Activated CD4-positive, alpha-beta memory T cell treated with anti-CD3 and anti-CD28 coated beads, Interleukin-2, amount 10 ng/mL, durations not matched to agents 7 days and 5 days (primary cell): ENCODE measurements at regions of chr18 and their contacts with region 1.

Region 1: GRCh38 chr18:13268158-13269012 is 49.8 kb downstream of the LDLRAD4 start:
- DNase-seq: no peak
- H3K4me3 Mint-ChIP-seq: no peak overlapping the region
- H3K27ac Mint-ChIP-seq: peak overlapping the region; percentile 73
- H3K4me1 Mint-ChIP-seq: peaks cover 59% of the 10 kb centered on the region
- H3K27me3 Mint-ChIP-seq: no peaks in the 10 kb centered on the region

Region 2: GRCh38 chr18:12911025-12911928 is 357.1 kb before region 1 on chr18:
- CTCF ChIA-PET with region 1: no interaction called
- POLR2A ChIA-PET with region 1: no interaction called
- DNase-seq: peak; percentile 56
- H3K4me3 Mint-ChIP-seq: peak overlapping the region; percentile 32
- H3K27ac Mint-ChIP-seq: no peak overlapping the region
- H3K4me1 Mint-ChIP-seq: peaks cover 10% of the 10 kb centered on the region
- H3K27me3 Mint-ChIP-seq: peaks cover 21% of the 10 kb centered on the region

Region 3: GRCh38 chr18:13253762-13254688 is 14.4 kb before region 1 on chr18:
- CTCF ChIA-PET with region 1: no interaction called
- POLR2A ChIA-PET with region 1: no interaction called
- DNase-seq: no peak
- H3K4me3 Mint-ChIP-seq: no peak overlapping the region
- H3K27ac Mint-ChIP-seq: no peak overlapping the region
- H3K4me1 Mint-ChIP-seq: no peaks in the 10 kb centered on the region
- H3K27me3 Mint-ChIP-seq: peaks cover 8% of the 10 kb centered on the region

Region 4: DNA sequence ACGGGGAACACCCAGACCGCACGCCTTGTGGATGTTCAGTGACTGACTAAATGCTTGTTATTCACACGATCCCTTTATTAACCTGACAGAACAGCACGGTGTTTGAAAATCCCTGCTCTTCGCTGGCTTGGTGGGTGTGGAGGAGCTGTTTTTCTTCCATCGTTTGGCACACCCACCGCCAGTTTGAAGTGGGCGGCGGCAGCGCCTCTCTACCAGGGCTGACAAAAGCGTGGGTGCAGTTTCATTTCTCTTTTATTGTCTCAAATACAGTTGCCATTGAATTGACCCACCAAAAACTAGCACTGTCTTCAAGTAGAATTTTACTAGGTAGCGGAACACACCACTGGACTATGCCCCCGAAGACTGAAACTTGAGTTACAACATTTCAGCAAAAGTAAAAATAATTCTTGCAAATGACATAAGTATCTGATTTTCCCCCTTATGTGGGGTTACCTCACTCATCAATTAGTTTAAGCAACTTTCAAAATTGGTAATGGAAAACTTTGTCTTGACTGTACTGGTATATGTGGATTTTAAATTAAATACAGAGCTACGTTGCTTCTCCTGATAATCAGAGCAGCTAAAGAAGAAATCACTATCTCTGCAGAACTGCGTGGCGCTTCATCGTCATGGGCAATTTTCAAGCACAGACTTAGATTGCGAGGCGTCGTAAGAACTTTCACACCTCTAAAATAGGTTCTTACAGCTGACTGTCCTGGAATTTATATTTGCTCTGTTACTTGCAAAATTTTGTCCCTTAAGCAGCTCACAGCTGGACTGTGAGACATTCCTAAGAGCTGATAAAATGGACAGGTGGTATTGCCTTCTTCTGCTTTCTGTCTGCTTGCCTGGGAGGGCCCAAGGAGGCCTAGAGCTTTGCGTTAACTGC is 11.0 kb after region 1 on chr18:
- CTCF ChIA-PET with region 1: interaction called, 11 read pairs
- POLR2A ChIA-PET with region 1: interaction called, 15 read pairs
- DNase-seq: no peak
- H3K4me3 Mint-ChIP-seq: peak overlapping the region; percentile 59
- H3K27ac Mint-ChIP-seq: peak overlapping the region; percentile 81
- H3K4me1 Mint-ChIP-seq: peaks cover 82% of the 10 kb centered on the region
- H3K27me3 Mint-ChIP-seq: no peaks in the 10 kb centered on the region

Region 5: DNA sequence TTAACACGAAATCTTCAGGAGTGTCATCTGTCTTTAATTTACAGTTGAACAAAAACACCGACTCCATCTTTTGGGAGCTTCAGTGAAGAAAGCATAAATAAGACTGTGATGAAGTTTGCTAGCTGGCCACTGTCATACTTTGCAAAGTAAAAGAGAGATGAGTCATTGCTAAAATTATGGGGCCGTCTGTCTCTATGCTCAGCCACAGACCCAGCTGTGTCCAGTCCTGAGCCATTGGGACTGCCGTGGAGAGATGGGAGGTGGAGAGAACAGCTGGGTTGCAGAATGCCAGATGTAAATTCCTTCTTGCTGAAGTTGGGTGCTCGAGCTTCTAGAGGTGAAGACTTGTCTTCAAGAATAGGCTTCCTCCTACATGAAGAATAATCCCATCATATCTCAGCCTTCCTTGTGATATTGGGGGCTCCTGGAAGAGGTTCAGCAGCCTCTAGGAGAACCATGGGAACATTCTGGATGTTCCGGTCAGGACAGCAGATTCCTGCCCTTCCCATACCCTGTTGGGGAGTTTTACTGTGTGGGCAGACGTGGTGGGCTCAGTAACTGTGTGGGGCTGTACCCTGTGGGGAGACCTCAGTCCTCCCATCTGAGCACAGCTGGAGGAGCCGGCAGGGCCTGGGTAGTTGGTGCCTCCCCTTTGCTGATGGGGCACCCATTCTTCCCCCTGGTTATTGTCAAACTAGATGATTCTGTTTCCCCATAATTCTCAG is 21.3 kb after region 1 on chr18:
- CTCF ChIA-PET with region 1: no interaction called
- POLR2A ChIA-PET with region 1: interaction called, 17 read pairs
- DNase-seq: no peak
- H3K4me3 Mint-ChIP-seq: no peak overlapping the region
- H3K27ac Mint-ChIP-seq: peak overlapping the region; percentile 38
- H3K4me1 Mint-ChIP-seq: peaks cover 71% of the 10 kb centered on the region
- H3K27me3 Mint-ChIP-seq: no peaks in the 10 kb centered on the region

Region 6: DNA sequence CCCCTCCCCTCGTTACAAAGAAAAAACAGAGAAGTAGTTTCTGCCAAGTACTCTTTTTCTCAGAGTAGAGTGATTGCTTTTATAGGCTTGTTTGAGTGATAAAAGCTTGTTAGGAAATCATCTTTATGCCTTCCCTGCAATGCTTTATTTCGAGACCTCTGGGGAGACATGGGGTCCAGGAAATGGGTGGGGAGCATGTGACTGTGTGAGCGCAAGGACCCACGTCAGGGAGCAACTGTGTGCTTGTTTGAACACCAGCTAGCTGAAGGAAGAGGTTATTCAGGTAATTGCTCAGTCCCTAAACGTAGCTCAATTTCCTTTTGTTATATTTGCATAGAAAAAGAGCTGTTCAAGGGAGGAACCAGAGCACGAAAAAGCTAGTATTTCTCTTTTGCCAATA is 270.7 kb after region 1 on chr18:
- CTCF ChIA-PET with region 1: no interaction called
- POLR2A ChIA-PET with region 1: no interaction called
- DNase-seq: no peak
- H3K4me3 Mint-ChIP-seq: no peak overlapping the region
- H3K27ac Mint-ChIP-seq: no peak overlapping the region
- H3K4me1 Mint-ChIP-seq: peaks cover 14% of the 10 kb centered on the region
- H3K27me3 Mint-ChIP-seq: no peaks in the 10 kb centered on the region